CD4-positive, alpha-beta T cell (primary cell): ENCODE measurements at regions of chrX and their contacts with region 1.

Region 1: DNA sequence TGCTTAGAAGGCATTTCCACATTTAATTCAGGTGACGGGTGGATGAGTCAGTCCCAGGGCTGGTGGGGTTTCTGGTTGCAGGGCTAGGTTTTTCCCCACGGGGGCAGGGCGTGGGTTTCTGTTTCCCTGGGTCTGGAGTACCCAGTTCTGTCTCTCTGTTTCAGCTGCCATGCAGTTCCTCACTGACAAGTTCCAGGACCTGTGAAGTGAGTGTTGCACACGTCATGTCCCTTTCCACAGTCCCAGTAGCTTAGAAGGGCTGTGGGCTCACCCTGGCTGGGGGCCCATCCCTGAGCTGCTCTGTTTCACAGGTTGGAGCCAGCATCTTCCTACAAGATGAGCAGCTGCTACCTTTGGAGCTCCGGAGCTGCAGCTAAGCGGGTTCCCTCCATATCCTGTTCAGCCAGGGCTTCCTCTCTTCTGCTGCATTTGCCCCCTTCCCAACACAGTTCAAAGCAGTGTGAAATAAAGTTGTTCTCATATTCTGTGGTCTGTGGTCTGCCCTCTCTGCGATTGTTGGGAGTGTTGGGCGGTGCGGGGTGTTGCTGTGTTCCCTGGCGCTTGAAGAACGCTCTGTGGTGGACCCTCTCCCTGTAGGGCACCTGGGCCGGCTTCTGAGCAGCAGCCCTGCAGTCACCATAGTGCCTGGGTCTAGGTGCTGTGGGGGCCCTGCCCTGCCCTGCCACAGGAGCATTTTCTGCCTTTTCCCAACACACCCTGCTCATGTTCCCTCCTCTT is 3.9 kb downstream of the LOC101059915 start:
- DNase-seq: peak in 3 of 14 experiments; percentile 11 to 30 (median 26)
- ATAC-seq: peak; percentile 34
- H3K4me3 ChIP-seq: no peak overlapping the region
- H3K4me3 Mint-ChIP-seq: no peak overlapping the region
- H3K27ac ChIP-seq: no peak overlapping the region
- H3K27ac Mint-ChIP-seq: no peak overlapping the region
- H3K4me1 ChIP-seq: peaks cover 12% of the 10 kb centered on the region
- H3K4me1 Mint-ChIP-seq: peaks cover 22% of the 10 kb centered on the region
- H3K27me3 ChIP-seq: no peaks in the 10 kb centered on the region
- H3K27me3 Mint-ChIP-seq: no peaks in the 10 kb centered on the region
- CTCF ChIP-seq: no peak

Region 2: GRCh38 chrX:71859637-71860036 is 188.4 kb after region 1 on chrX:
- CTCF ChIA-PET with region 1: interaction called, 3 read pairs
- POLR2A ChIA-PET with region 1: no interaction called
- intact Hi-C with region 1: loop called (anchors 1 kb)
- DNase-seq: peak in 11 of 14 experiments; percentile 1 to 60 (median 14)
- ATAC-seq: no peak
- H3K4me3 ChIP-seq: no peak overlapping the region
- H3K4me3 Mint-ChIP-seq: no peak overlapping the region
- H3K27ac ChIP-seq: no peak overlapping the region
- H3K27ac Mint-ChIP-seq: no peak overlapping the region
- H3K4me1 ChIP-seq: no peaks in the 10 kb centered on the region
- H3K4me1 Mint-ChIP-seq: no peaks in the 10 kb centered on the region
- H3K27me3 ChIP-seq: no peaks in the 10 kb centered on the region
- H3K27me3 Mint-ChIP-seq: no peaks in the 10 kb centered on the region
- CTCF ChIP-seq: peak; percentile 64

Region 3: DNA sequence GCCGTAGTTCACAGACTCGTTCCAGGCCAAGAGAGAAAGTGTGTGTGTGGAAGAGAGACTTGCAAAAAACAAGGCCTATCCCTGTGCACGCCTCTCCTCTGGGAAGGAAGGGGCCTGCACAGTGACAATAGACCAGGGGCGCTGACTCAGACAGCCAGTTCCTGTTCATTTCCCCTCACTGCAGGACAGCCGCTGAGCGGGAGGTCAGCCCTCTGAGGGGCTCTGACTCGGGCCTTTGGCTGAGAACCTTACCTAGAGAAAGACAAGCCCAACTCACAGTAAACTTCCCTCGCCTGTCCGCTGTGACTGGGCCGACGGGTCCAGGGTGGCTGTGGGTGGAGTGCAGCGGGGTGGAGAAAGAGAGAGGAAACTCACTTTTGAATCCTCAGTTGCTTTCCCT is 408.4 kb after region 1 on chrX:
- CTCF ChIA-PET with region 1: no interaction called
- POLR2A ChIA-PET with region 1: no interaction called
- intact Hi-C with region 1: no loop called
- DNase-seq: no peak
- ATAC-seq: no peak
- H3K4me3 ChIP-seq: no peak overlapping the region
- H3K4me3 Mint-ChIP-seq: no peak overlapping the region
- H3K27ac ChIP-seq: no peak overlapping the region
- H3K27ac Mint-ChIP-seq: no peak overlapping the region
- H3K4me1 ChIP-seq: peaks cover 18% of the 10 kb centered on the region
- H3K4me1 Mint-ChIP-seq: peaks cover 9% of the 10 kb centered on the region
- H3K27me3 ChIP-seq: no peaks in the 10 kb centered on the region
- H3K27me3 Mint-ChIP-seq: no peaks in the 10 kb centered on the region
- CTCF ChIP-seq: no peak